MCF 10A (cell line): ENCODE measurements at regions of chr1 and their contacts with region 1.

Region 1: GRCh38 chr1:214328770-214329469 is 48.0 kb downstream of the SMYD2 start:
- DNase-seq: peak; percentile 95
- H3K4me3 Mint-ChIP-seq: no peak overlapping the region
- H3K27ac Mint-ChIP-seq: no peak overlapping the region
- H3K4me1 Mint-ChIP-seq: no peaks in the 10 kb centered on the region
- H3K27me3 Mint-ChIP-seq: no peaks in the 10 kb centered on the region
- CTCF ChIP-seq: peak; percentile 100

Region 2: DNA sequence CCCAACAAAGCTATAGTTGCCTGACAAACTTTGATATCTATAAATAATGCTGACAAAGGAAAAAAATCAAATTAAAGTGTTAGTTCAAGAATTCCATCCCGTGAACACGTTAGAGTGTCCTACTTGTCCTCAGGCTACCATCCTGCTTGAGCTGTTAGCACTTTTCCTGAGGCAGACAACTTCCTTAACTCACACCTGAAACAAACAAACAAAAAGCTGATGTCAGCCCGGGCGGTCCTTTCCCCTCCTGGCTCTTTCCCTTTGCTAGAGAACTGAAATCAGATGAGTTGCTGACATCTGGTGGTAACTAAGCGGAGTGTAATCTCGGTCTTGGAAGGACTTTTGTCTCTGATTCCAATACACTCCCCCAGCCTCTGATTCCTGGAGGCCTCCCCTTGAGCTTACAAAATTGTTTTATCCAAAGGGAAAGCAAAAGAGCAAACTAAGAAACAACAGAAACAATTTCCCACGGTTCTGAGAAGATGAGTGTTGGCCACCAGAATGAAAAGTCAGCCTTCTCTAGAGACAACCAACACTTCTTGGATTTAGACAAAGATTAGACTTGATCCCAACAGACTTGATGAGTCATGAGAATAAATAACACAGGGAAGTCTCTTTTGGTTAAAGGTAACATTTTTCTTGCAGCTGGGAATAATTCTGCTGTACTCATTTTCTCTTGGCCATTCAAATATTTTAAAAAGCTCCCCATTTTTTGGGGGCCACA is 205.7 kb before region 1 on chr1:
- CTCF ChIA-PET with region 1: interaction called, 15 read pairs
- POLR2A ChIA-PET with region 1: no interaction called
- intact Hi-C with region 1: loop called (anchors 2 kb)
- DNase-seq: peak; percentile 78
- H3K4me3 Mint-ChIP-seq: no peak overlapping the region
- H3K27ac Mint-ChIP-seq: no peak overlapping the region
- H3K4me1 Mint-ChIP-seq: peaks cover 6% of the 10 kb centered on the region
- H3K27me3 Mint-ChIP-seq: no peaks in the 10 kb centered on the region
- CTCF ChIP-seq: peak; percentile 95

Region 3: DNA sequence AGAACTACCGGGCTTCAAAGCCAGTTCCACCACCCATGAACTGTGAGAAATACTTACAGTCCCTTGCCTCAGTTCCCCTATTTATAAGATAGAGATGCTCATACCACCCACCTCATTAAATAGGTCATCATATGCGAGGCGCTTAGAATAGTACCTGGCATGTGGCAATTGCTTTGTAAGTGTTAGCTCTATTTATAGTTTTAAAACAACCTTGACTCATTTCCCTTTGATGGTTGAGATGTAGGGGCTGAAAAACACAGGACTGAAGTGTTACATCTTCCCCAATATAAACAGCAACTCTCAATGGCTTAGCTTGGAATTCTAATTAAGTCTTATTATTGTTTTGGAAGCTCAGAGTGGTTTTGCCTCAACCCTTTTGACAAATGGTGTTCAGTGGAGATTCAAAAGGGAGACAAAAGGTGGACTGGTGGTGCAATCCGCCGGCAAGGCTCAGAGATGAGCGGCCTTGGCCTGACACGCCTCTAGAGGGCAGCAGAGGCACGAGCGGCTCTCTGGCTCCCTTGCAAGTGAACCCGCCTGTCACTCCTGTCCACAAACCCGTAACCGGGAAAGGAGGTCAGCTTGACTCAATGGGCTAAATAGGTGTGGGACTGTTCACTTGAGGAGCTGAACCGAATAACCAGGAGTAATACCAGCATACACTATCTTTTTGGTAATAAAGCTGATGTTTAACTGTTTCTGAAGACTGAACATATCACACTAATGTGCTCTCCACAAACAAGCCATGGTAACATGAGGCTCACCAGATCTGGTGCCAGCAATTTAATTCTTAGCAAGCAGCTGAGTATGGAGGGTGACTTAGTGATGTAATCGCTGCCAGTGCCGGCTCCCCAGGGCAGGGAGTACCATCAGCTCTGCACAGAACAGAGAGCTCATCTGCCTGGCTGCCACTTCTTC is 67.5 kb before region 1 on chr1:
- CTCF ChIA-PET with region 1: interaction called, 918 read pairs
- POLR2A ChIA-PET with region 1: interaction called, 33 read pairs
- intact Hi-C with region 1: loop called (anchors 1 kb)
- DNase-seq: peak; percentile 93
- H3K4me3 Mint-ChIP-seq: no peak overlapping the region
- H3K27ac Mint-ChIP-seq: no peak overlapping the region
- H3K4me1 Mint-ChIP-seq: peaks cover 12% of the 10 kb centered on the region
- H3K27me3 Mint-ChIP-seq: peaks cover 61% of the 10 kb centered on the region
- CTCF ChIP-seq: peak; percentile 100

Region 4: GRCh38 chr1:214377886-214378285 is 49.0 kb after region 1 on chr1:
- CTCF ChIA-PET with region 1: interaction called, 33 read pairs
- POLR2A ChIA-PET with region 1: no interaction called
- intact Hi-C with region 1: no loop called
- DNase-seq: no peak
- H3K4me3 Mint-ChIP-seq: no peak overlapping the region
- H3K27ac Mint-ChIP-seq: peak overlapping the region; percentile 47
- H3K4me1 Mint-ChIP-seq: peaks cover 11% of the 10 kb centered on the region
- H3K27me3 Mint-ChIP-seq: no peaks in the 10 kb centered on the region
- CTCF ChIP-seq: no peak

Region 5: DNA sequence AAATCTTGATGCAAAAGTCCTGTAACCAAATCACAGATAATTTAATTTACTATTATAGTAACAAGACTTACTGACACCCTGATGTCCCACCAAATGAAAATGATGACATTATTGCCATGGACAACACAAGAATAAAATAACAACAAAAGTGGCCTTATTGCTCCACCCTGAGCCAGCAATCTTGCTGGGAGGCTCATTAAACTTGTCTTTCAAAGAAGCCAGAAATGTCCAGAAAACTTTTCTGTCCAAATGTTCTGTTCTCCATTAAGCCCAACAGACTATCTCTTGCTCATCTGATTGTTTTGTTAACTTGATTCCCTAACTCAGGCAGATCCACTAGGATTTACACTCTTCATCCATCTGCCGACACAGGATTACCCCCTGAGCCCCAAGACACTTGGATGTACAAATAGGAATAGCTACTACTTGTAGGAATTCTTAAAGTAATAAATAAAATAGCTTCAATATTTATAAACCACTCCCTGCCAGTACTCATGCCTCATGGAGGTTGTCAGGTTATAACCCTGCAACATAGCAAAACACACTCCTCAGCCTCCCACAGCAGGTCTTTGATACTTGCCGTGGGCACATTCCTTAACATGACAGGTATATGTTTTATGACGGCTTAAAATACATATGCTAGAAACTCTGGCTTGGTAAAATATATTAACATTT is 137.6 kb after region 1 on chr1:
- CTCF ChIA-PET with region 1: interaction called, 11 read pairs
- POLR2A ChIA-PET with region 1: no interaction called
- intact Hi-C with region 1: no loop called
- DNase-seq: peak; percentile 54
- H3K4me3 Mint-ChIP-seq: peak overlapping the region; percentile 37
- H3K27ac Mint-ChIP-seq: peak overlapping the region; percentile 88
- H3K4me1 Mint-ChIP-seq: peaks cover 65% of the 10 kb centered on the region
- H3K27me3 Mint-ChIP-seq: no peaks in the 10 kb centered on the region
- CTCF ChIP-seq: no peak

Region 6: DNA sequence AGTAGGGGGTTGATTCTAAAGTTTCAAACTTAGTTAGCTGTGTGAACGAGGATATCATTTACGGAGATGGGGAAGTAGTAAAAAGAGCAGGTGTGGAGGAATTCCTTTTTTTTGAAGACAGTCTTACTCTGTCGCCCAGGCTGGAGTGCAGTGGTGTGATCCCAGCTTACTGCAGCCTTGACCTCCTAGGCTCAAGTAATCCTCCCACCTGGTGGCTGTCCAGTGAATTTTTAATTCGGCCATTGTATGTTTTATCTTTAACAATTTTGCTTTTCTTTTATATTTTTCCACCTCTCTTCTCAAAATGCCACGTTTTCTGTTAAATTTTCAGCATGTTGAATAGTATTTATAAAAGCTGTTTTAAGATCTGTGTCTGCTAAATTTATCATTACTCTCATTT is 261.8 kb after region 1 on chr1:
- CTCF ChIA-PET with region 1: interaction called, 958 read pairs
- POLR2A ChIA-PET with region 1: interaction called, 53 read pairs
- intact Hi-C with region 1: loop called (anchors 1 kb)
- DNase-seq: no peak
- H3K4me3 Mint-ChIP-seq: no peak overlapping the region
- H3K27ac Mint-ChIP-seq: no peak overlapping the region
- H3K4me1 Mint-ChIP-seq: no peaks in the 10 kb centered on the region
- H3K27me3 Mint-ChIP-seq: no peaks in the 10 kb centered on the region
- CTCF ChIP-seq: peak; percentile 33

Region 7: DNA sequence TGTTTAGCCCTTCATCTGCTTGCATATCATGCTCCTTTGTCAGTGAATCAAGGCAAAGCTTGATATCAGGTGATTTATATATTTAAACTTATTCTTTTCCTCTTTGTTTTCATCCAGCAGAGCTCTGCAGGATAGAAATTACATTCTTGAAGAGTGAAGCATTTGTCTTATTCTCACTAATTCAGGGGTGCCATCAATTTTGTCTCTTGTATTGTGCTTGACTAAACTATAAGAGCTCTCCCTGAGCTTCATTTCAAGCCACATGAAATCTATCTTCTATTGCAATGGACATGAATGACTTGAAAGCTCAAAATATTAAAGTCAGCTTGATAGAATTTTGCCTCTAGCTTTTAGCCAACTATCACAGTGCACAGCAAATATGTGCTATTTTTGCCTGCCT is 1001.5 kb after region 1 on chr1:
- CTCF ChIA-PET with region 1: no interaction called
- POLR2A ChIA-PET with region 1: no interaction called
- intact Hi-C with region 1: no loop called
- DNase-seq: no peak
- H3K4me3 Mint-ChIP-seq: no peak overlapping the region
- H3K27ac Mint-ChIP-seq: no peak overlapping the region
- H3K4me1 Mint-ChIP-seq: no peaks in the 10 kb centered on the region
- H3K27me3 Mint-ChIP-seq: no peaks in the 10 kb centered on the region
- CTCF ChIP-seq: no peak

Region 8: DNA sequence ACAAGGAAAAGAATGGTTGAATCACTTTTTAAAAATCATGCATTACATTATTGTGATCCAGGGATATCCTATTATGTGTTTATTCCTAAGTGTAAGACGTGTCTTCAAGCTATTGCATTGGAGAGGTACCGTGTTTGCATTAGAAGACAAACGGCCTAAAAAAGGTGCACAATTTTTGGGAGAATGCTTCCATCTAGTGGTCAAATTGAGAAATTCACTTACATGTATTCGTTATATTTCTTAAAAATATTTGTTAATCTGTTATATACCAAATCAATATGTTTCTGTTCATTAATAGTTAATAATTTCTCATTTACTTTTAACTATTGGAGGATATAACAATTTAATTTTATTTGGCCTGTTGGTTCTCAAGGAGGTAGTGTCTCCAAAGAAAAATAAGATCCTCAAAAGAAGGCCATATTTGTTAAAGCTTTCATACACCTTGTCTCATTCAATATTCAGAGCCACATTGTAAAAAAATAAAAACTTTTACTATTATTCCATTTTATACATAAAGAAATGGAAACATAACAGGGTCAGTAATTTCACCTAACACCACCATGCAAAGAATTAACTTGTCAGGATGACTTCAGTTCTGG is 1197.7 kb after region 1 on chr1:
- CTCF ChIA-PET with region 1: interaction called, 46 read pairs
- POLR2A ChIA-PET with region 1: no interaction called
- intact Hi-C with region 1: loop called (anchors 2 kb)
- DNase-seq: peak; percentile 80
- H3K4me3 Mint-ChIP-seq: no peak overlapping the region
- H3K27ac Mint-ChIP-seq: no peak overlapping the region
- H3K4me1 Mint-ChIP-seq: peaks cover 12% of the 10 kb centered on the region
- H3K27me3 Mint-ChIP-seq: no peaks in the 10 kb centered on the region
- CTCF ChIP-seq: peak; percentile 86